ENCODE measurements at regions of chr10 and their contacts with region 1.

Region 1: GRCh38 chr10:92965314-92965713 is 95.3 kb upstream of the CYP26C1 start:
- DNase-seq: no peak
- H3K4me3 Mint-ChIP-seq: no peak overlapping the region
- H3K27ac Mint-ChIP-seq: no peak overlapping the region
- H3K4me1 Mint-ChIP-seq: no peaks in the 10 kb centered on the region
- H3K27me3 Mint-ChIP-seq: no peaks in the 10 kb centered on the region

Region 2: DNA sequence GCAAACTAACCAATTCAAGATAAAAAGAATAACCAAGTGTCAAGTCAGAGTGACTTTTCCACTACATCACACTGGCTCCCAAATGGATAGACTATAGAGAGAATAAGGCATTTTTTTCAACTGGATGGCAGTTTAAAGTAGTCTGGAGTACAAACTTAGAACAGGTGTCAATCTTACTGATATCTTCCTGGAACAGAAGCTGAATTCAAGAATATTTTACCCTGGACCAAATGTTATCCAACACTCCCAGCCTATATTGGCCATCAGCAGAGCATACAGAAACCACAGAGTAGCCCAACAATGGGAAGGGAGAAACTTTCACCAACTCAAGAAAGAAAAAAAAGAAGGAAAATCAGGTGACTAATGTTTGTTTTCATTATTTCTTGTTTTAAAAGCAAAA is 402.9 kb before region 1 on chr10:
- intact Hi-C with region 1: no loop called
- DNase-seq: no peak
- H3K4me3 Mint-ChIP-seq: no peak overlapping the region
- H3K27ac Mint-ChIP-seq: no peak overlapping the region
- H3K4me1 Mint-ChIP-seq: peaks cover 18% of the 10 kb centered on the region
- H3K27me3 Mint-ChIP-seq: no peaks in the 10 kb centered on the region

Region 3: DNA sequence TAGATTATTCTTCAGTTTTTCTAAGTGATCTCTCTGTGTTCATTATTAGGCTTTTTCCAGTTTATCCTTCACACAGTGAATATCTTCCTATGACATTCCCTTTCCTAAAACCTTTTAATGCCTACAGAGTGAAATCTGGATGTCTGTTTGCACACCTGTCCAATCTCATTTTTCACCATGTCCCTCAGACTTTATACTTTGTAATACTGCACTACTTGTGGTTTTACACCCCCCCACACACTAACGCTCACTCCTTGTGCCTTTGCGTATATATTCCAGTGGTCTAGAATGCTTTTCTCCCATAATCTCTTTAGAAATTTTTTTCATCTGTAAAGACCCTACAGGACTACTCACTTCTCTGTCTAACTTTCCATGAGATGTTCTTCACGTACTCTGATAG is 18.8 kb before region 1 on chr10:
- intact Hi-C with region 1: no loop called
- DNase-seq: no peak
- H3K4me3 Mint-ChIP-seq: no peak overlapping the region
- H3K27ac Mint-ChIP-seq: peak overlapping the region; percentile 5
- H3K4me1 Mint-ChIP-seq: no peaks in the 10 kb centered on the region
- H3K27me3 Mint-ChIP-seq: no peaks in the 10 kb centered on the region

Region 4: DNA sequence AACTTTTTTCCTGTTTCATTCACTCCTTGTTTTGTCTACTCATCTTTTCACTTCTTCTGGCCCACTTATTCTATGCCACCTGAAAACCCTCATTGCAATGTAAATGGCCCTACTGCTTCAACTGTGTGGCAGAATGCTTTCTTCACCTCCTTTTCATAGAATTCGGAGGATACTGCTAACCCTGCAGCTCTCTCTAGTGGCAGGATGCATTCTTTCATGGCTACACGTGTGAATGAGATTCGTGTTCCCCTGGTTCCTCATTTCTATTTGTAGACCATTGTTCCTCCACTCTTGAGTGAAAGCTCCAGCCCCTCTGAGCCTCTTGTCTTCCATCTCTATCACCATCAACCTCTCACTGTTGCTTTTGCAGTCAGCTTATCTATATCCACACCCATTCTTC is 74.4 kb after region 1 on chr10:
- intact Hi-C with region 1: loop called (anchors 2 kb)
- DNase-seq: no peak
- H3K4me3 Mint-ChIP-seq: no peak overlapping the region
- H3K27ac Mint-ChIP-seq: no peak overlapping the region
- H3K4me1 Mint-ChIP-seq: no peaks in the 10 kb centered on the region
- H3K27me3 Mint-ChIP-seq: no peaks in the 10 kb centered on the region

Region 5: GRCh38 chr10:93074147-93074596 is 108.9 kb after region 1 on chr10:
- intact Hi-C with region 1: loop called (anchors 5 kb)
- DNase-seq: no peak
- H3K4me3 Mint-ChIP-seq: peak overlapping the region; percentile 39
- H3K27ac Mint-ChIP-seq: no peak overlapping the region
- H3K4me1 Mint-ChIP-seq: peaks cover 16% of the 10 kb centered on the region
- H3K27me3 Mint-ChIP-seq: peaks cover 79% of the 10 kb centered on the region

Region 6: DNA sequence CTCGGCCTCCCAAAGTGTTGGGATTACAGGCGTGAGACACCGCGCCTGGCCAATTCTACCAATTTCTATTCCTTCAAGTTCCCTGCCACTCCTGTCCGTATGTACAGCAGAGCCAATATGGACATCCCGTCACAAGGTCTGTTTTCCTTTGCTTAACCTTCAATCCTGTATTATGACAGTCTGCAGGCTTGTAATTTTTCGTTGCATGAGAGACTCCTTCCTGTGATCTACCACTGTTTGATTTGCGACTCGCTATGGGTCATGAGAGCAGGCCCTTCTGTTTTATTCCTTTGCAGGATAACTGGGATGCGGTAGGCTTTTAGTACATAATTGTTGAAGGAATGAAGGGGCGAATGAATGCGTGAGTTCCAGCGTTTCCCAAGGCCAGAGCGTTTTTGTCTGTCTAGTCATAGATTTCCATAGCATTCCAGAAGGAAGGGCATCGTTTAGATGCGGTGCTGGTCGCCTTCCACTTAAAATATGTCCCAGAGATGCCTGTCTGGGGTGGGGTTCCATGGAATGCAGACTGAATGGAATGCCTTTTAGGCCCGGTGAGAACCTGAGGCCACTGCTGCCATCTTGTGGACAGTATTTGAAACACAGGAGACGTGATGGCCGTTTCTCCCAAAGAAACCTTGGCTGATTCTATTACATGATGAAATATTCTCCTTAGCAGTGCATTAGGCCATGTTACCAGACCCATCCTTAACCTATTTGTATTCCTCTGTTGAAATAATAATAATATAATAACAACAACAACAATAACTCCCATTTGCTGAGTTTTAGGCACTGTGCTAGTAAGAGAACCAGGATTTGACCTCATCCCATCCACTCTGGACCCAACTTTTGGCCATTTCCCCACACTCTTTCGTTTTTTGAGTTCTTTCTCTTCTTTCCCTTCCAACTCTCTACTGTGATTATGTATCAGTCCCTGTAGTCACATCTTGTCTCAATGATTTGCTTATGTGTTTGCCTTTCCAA is 323.6 kb after region 1 on chr10:
- intact Hi-C with region 1: loop called (anchors 1 kb)
- DNase-seq: peak; percentile 17
- H3K4me3 Mint-ChIP-seq: no peak overlapping the region
- H3K27ac Mint-ChIP-seq: no peak overlapping the region
- H3K4me1 Mint-ChIP-seq: no peaks in the 10 kb centered on the region
- H3K27me3 Mint-ChIP-seq: peaks cover 6% of the 10 kb centered on the region

Region 7: DNA sequence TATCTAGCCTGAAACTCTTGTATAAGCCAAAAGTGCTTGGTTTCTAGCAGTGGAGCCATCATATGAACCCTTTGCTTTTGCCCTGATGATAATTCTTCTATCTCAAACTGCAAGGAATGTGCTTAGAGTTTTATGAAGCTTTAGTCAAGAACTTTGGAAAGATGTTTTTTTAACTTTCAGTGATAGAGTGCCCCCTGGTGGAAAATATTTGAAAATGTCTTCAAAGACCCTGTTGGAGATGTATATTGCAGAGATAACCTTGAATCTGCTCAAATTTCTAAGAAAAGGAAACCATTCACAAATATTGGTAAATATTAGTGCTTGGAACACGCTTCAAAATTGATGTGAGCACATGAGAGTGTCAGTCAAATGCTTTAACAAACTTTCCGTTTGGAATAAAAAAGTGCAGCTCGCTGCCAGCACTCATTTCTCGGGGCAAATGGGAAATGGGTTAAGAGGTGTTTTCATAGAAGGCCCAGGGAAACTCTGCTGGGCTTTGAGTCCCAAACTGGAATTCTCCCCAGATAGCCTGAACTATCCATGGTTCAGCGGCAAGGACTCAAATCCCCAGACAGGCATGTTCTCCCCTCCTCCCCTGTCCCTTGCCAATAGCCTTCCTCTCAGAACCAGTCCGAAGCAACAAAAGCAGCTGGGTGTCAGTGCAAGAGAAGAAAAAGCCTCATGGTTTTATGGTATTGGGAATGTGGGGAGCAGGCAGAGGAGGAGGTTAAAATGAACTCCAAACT is 387.5 kb after region 1 on chr10:
- intact Hi-C with region 1: loop called (anchors 10 kb)
- DNase-seq: no peak
- H3K4me3 Mint-ChIP-seq: no peak overlapping the region
- H3K27ac Mint-ChIP-seq: no peak overlapping the region
- H3K4me1 Mint-ChIP-seq: peaks cover 3% of the 10 kb centered on the region
- H3K27me3 Mint-ChIP-seq: peaks cover 2% of the 10 kb centered on the region

Region 8: GRCh38 chr10:93515071-93516005 is 550.0 kb after region 1 on chr10:
- intact Hi-C with region 1: loop called (anchors 1 kb)
- DNase-seq: no peak
- H3K4me3 Mint-ChIP-seq: no peak overlapping the region
- H3K27ac Mint-ChIP-seq: no peak overlapping the region
- H3K4me1 Mint-ChIP-seq: peaks cover 4% of the 10 kb centered on the region
- H3K27me3 Mint-ChIP-seq: no peaks in the 10 kb centered on the region

Measured in activated T-helper 1 cell treated with anti-CD3 and anti-CD28 coated beads, Interleukin-12 subunit alpha, Interleukin-12 subunit beta, Interleukin-2, Interleukin-4 antibody, amounts not matched to agents 30 ng/mL and 10 ng/mL and 1 ng/mL, durations not matched to agents 14 hours and 24 hours and 36 hours (primary cell).